Common myeloid progenitor, CD34-positive (primary cell): ENCODE measurements at regions of chr18 and their contacts with region 1.

Region 1: GRCh38 chr18:56575819-56576663 is 62.4 kb downstream of the TXNL1 start:
- DNase-seq: peak; percentile 56 to 73 (median 64)
- H3K4me3 ChIP-seq: no peak overlapping the region
- H3K27ac ChIP-seq: no peak overlapping the region
- H3K4me1 ChIP-seq: peaks cover 0 to 5% (median 0%) of the 10 kb centered on the region in 4 experiments
- H3K27me3 ChIP-seq: no peaks in the 10 kb centered on the region

Region 2: DNA sequence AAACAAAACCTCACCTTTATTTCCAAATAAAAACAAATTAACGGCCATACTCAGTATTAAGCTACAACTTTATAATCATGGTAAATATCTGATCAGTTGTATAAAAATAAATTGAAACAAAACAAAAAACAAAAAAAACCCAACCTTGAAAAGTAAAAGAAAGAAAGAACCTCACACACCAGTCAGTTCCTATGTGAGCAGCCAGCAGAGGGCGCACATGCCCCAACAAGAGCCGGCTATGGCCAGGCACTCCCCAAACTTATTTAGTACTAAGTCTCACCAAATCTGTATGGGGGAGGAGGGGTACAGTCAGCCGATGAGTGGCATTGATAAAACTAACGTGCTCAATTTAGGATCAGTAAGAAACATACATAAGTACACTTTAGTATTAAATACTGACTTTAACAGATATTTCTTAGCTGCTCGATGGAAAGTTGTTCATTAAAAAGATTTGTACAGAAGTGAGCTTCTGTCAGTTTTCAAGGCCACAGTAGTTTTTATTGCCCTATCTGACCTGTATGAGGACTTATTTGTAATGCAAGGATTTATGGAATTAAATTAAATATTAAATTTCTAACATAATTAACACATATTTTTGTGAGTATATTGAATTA is 1160.7 kb before region 1 on chr18:
- CTCF ChIA-PET with region 1: interaction called, 10 read pairs
- POLR2A ChIA-PET with region 1: no interaction called
- DNase-seq: peak; percentile 90 to 93 (median 90)
- H3K4me3 ChIP-seq: no peak overlapping the region
- H3K27ac ChIP-seq: no peak overlapping the region
- H3K4me1 ChIP-seq: peaks cover 2 to 10% (median 4%) of the 10 kb centered on the region in 4 experiments
- H3K27me3 ChIP-seq: no peaks in the 10 kb centered on the region